Calu3 (cell line): ENCODE measurements at regions of chr14 and their contacts with region 1.

Region 1: DNA sequence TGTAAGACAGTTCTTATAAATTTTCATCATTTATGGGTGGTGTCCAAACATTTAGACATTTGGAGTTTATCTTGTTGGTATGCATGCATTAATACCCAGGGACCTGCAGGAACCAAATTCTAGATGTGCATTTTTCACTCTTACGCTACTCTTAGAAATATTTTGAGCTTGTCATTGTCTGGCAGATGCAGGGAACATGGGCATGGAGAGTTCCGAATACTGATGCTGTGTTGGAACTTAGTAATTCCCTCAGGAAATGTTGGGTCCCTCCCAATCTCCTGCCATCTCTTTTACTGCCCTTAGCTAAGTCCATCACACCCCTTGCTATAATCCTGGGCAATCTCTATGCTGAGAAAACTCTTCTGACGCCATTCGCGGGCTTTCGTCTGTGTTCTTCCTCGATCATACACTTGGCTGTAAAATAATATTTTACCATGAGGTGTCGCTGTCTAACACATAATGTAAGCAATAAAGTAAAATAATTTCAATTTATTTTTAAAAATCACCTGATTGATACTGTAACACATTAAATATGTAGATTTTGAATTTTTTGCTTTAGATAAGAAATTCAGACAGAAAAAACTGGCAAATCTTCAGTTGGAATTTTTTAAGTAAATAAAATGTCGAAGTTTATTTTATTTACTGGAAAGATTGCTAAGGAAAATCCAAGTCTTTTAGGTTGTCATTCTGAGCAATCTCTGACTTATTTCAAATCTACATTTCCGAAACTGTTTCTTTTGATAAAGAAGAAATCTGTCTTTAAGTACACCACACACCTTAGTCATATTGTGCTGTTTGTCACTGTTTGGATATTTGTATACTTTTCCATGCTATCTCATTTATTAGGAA is 304.1 kb upstream of the SSTR1 start:
- DNase-seq: peak; percentile 10
- H3K4me3 Mint-ChIP-seq: peak overlapping the region; percentile 65
- H3K27ac Mint-ChIP-seq: no peak overlapping the region
- H3K4me1 Mint-ChIP-seq: peaks cover 5% of the 10 kb centered on the region
- H3K27me3 Mint-ChIP-seq: peaks cover 15% of the 10 kb centered on the region
- CTCF ChIP-seq: no peak

Region 2: DNA sequence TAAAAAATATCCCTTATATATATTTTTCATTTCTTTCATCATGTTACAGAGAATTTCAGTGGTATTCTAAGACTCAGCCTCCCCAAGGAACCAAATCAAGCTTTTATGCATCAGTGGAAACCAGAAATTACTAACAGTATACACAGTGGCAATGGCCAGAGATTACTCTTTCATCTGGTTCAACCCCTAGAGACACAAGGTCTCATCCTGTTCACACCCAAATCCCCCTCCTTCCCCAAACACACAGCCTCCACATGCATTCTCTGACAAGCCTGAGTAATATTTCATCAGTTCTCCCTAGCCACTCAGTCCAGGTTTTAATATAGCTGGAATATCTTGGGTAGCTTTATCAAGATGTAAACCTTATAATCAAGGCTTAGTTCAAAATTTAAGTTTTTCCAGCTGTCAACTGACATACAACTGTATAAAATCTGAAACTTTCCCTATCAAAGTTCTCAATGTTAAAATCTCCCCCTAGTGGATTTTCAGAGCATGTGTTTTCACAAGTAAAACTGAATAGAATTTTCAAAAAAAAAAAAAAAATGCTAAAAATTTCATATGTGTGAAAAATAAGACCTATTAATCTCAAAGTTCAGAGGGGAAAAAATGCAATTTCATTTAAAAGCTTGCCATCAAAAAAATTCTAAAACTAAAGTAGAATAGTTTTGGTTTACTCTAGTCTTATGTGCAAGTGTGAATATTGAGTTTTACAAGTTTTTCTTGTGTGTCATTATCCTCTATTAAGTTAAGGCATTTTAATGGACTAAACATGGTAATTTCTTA is 293.6 kb after region 1 on chr14:
- CTCF ChIA-PET with region 1: no interaction called
- intact Hi-C with region 1: loop called (anchors 1 kb)
- DNase-seq: no peak
- H3K4me3 Mint-ChIP-seq: no peak overlapping the region
- H3K27ac Mint-ChIP-seq: no peak overlapping the region
- H3K4me1 Mint-ChIP-seq: no peaks in the 10 kb centered on the region
- H3K27me3 Mint-ChIP-seq: peaks cover 8% of the 10 kb centered on the region
- CTCF ChIP-seq: peak; percentile 16

Region 3: GRCh38 chr14:38605193-38606114 is 701.9 kb after region 1 on chr14:
- CTCF ChIA-PET with region 1: no interaction called
- intact Hi-C with region 1: loop called (anchors 5 kb)
- DNase-seq: no peak
- H3K4me3 Mint-ChIP-seq: no peak overlapping the region
- H3K27ac Mint-ChIP-seq: no peak overlapping the region
- H3K4me1 Mint-ChIP-seq: no peaks in the 10 kb centered on the region
- H3K27me3 Mint-ChIP-seq: peaks cover 3% of the 10 kb centered on the region
- CTCF ChIP-seq: no peak

Region 4: GRCh38 chr14:38948171-38948570 is 1044.6 kb after region 1 on chr14:
- CTCF ChIA-PET with region 1: interaction called, 10 read pairs
- intact Hi-C with region 1: no loop called
- DNase-seq: no peak
- H3K4me3 Mint-ChIP-seq: no peak overlapping the region
- H3K27ac Mint-ChIP-seq: no peak overlapping the region
- H3K4me1 Mint-ChIP-seq: peaks cover 15% of the 10 kb centered on the region
- H3K27me3 Mint-ChIP-seq: no peaks in the 10 kb centered on the region
- CTCF ChIP-seq: no peak